ENCODE measurements at regions of chrX and their contacts with region 1.

Region 1: DNA sequence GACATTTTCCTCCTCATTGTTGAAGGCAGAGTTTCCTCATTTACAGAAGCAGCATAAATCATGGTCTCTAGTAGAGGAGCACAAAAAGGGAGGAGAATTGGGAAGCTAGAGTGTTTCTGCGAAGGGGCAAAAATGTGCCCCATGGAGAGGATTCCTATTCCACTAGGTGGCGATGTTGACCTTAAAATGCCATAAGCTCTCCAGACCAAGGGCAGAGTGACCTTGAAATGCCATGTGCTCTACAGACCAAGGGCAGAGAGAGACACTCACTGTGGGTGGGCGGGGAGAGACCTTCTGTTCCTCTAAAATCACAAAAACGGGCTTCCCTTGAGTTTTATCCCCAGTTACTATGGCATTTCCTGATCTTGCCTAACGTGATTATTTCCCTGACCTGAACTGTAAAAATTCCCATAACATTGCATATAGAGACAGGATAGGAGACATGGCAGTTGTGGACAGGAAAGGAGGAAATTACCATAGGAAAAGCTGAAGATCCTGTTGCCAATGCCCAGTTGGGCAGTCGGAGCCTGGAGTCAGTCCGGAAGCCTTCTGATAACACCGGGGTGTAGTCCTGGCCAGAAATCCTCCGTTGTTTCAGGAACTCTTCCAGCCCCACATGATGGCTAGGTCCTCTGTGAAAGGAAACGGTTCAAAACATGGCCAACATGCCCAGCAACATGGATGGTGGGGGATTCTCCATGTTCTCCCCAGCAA is 567.7 kb downstream of the MAGEB5 start:
- DNase-seq: peak; percentile 25
- ATAC-seq: no peak
- H3K4me3 ChIP-seq: no peak overlapping the region
- H3K27ac ChIP-seq: no peak overlapping the region
- H3K4me1 ChIP-seq: no peaks in the 10 kb centered on the region
- H3K27me3 ChIP-seq: no peaks in the 10 kb centered on the region
- CTCF ChIP-seq: peak; percentile 56

Region 2: GRCh38 chrX:26762253-26762652 is 21.4 kb before region 1 on chrX:
- CTCF ChIA-PET with region 1: no interaction called
- POLR2A ChIA-PET with region 1: no interaction called
- intact Hi-C with region 1: no loop called
- DNase-seq: no peak
- ATAC-seq: no peak
- H3K4me3 ChIP-seq: no peak overlapping the region
- H3K27ac ChIP-seq: no peak overlapping the region
- H3K4me1 ChIP-seq: no peaks in the 10 kb centered on the region
- H3K27me3 ChIP-seq: no peaks in the 10 kb centered on the region
- CTCF ChIP-seq: no peak

Region 3: GRCh38 chrX:27086237-27086636 is 302.6 kb after region 1 on chrX:
- CTCF ChIA-PET with region 1: no interaction called
- POLR2A ChIA-PET with region 1: no interaction called
- intact Hi-C with region 1: no loop called
- DNase-seq: no peak
- ATAC-seq: no peak
- H3K4me3 ChIP-seq: no peak overlapping the region
- H3K27ac ChIP-seq: no peak overlapping the region
- H3K4me1 ChIP-seq: no peaks in the 10 kb centered on the region
- H3K27me3 ChIP-seq: no peaks in the 10 kb centered on the region
- CTCF ChIP-seq: no peak

Region 4: GRCh38 chrX:27186664-27187063 is 403.0 kb after region 1 on chrX:
- CTCF ChIA-PET with region 1: no interaction called
- POLR2A ChIA-PET with region 1: no interaction called
- intact Hi-C with region 1: loop called (anchors 10 kb)
- DNase-seq: peak; percentile 50
- ATAC-seq: no peak
- H3K4me3 ChIP-seq: no peak overlapping the region
- H3K27ac ChIP-seq: no peak overlapping the region
- H3K4me1 ChIP-seq: no peaks in the 10 kb centered on the region
- H3K27me3 ChIP-seq: 0 out of 2 replicates have a peak, but pooled peaks cover 4% of the 10 kb centered on the region
- CTCF ChIP-seq: peak; percentile 82